Motor neuron (in vitro differentiated cells): ENCODE measurements at regions of chr6 and their contacts with region 1.

Region 1: DNA sequence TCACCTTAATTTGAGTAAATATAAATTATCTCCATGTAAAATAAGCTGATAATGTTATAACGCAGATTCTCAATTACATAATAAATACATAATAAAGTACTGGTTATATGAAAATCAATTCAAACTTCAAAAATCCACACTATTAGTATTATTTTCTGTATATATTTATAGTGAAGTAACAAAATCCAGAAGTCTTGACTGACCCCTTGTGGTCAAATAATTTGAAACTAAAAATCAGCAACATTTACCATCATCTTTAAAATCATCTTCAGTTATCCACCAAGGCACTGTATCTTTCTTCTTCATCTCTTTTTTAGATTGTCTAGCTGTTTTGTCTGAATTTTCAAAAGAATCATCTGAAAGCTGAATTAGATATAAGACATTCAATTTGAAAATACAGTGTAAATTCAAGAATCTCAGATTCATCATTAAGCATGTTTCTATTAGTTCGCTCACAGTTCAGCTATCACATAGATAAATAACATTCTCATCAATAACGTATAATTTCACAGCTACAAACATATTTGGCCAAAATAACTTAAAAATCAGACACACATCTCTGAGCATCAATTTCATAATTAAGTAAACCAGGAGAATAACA is 6.5 kb downstream of the CEP162 start:
- ATAC-seq: no peak
- H3K4me3 ChIP-seq: no peak overlapping the region
- H3K27ac ChIP-seq: no peak overlapping the region
- H3K4me1 ChIP-seq: no peaks in the 10 kb centered on the region

Region 2: DNA sequence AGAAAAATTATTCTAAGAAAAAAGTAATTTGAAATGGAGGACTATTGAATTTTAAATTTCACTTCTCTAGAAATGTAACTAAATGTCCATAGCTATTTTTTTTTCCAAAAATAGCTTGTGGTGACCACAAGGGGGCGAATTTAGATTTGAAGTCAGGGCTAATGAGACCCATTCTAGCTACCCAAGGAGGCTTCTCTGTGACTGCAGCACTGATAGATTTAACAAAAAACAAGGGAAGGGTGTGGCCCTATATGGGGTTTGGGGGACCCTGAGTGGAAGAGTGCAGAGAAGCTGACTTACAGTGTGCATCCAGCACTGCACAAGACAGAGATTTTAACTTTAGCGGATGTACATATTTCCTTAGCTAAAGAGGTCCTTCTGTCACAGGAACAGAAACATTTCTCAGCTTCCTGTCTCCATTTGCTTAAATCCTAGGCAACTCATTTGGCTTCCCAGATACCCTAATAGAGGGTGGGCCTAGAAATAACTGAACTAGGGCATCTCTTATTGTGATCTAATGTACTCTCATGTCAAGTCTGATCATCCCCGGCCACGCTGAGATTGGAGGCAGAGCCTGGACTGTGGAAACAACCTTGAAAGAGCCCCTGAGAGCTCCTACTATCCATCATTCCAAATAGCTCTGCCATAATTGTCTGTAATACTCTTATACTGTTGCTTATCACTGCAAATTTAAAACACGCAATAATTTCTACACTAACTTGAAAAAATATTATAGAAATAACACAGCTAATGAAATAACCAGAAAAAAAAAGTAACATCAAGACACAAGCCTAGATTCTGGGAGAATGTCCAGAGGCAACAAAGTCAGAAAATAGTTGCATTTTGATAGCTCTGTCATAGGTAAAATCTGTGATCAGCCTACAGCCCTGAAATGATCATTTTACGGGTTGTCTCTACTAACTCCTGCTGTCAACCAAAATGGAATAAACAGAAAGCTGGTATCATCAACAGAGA is 605.6 kb before region 1 on chr6:
- in situ Hi-C with region 1: loop called in 1 of 9 experiments (anchors 25 kb)
- ATAC-seq: peak; percentile 40 to 89 (median 52)
- H3K4me3 ChIP-seq: no peak overlapping the region
- H3K27ac ChIP-seq: no peak overlapping the region
- H3K4me1 ChIP-seq: no peaks in the 10 kb centered on the region

Region 3: DNA sequence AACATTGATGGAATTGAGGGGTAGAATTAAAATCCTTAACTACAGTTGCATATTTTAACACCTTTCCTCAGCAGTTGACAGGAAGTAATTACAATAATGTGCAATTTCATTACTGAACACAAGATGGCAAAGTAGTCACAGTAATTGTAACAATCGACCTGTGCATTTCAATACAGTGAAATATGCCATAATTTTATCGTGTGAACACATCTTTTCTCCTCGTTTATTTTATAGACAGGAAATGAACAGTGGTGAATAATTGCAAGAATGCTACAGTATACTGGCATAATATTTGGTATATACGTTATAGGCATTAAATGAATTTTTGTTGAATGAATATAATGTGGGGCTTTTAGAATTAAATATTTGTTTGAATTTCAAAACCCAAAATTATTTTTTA is 336.4 kb before region 1 on chr6:
- in situ Hi-C with region 1: loop called (anchors 25 kb)
- ATAC-seq: peak in 7 of 8 experiments; percentile 26 to 73 (median 50)
- H3K4me3 ChIP-seq: no peak overlapping the region
- H3K27ac ChIP-seq: no peak overlapping the region
- H3K4me1 ChIP-seq: no peaks in the 10 kb centered on the region

Region 4: DNA sequence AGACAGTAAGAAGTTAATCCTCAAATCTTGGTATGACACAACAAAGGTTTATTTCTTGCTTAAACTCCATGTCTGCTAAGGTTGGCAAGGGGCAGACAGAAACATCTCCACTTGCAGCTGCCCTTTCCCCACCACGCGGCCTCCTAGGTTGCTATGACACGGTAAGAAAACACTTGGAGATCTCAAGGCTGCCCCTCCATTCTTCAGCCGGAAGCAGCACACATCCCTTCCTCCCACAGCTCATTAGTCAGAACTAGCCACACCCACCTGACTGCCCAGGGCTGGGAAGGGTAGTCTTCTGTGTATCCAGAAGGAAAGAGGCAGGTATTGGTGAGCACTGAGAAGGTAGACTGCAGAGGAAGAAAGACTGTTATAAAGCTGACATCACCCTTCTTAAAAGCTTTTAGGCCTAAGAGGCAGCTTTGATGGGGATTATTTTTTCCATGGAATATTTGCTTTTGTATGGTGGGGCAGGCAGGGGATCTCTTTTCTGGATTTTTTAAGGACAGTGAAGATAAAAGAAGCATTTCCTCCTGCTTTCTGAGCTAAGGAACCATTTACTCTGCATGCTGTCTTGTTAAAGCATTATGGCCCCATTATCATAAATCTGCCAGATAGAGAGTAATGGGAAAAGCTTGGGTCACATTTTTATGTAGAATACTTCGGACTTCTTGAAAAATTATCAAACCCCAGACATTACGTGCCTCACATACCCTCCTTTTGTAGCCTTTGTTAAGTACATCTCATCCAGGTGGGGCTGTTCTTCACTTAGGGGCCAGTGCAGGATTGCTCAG is 145.7 kb before region 1 on chr6:
- in situ Hi-C with region 1: no loop called
- ATAC-seq: peak; percentile 60 to 100 (median 100)
- H3K4me3 ChIP-seq: no peak overlapping the region
- H3K27ac ChIP-seq: peak overlapping the region in 1 of 2 donors; percentile 68
- H3K4me1 ChIP-seq: peaks cover 13 to 18% of the 10 kb centered on the region in 2 donors

Region 5: DNA sequence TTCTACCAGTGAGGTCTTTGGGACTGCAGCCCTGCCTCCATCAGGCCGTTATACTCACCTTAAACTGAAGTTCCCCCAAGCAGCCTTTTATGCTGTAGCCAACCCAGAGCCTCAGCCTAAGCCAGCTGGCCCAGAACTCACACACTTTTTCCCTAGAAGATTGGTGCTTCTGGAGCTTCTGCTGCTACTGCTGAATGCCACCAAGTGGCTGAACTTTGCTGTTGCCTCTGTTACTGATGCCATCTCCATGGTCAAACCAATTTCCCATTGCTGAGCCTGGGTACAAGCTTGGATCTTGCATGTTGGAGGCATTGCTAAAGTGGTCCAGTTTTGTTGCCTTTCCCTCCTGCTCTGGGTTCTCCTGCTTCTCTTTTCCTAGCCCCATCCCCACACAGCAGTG is 558.5 kb after region 1 on chr6:
- in situ Hi-C with region 1: no loop called
- ATAC-seq: no peak
- H3K4me3 ChIP-seq: no peak overlapping the region
- H3K27ac ChIP-seq: no peak overlapping the region
- H3K4me1 ChIP-seq: no peaks in the 10 kb centered on the region